Endothelial cell of umbilical vein (primary cell): ENCODE measurements at regions of chr14 and their contacts with region 1.

Region 1: GRCh38 chr14:67571272-67571850 is 28.7 kb downstream of the PIGH start:
- DNase-seq: peak; percentile 54
- H3K4me3 ChIP-seq: no peak overlapping the region
- H3K27ac ChIP-seq: no peak overlapping the region
- H3K4me1 ChIP-seq: no peaks in the 10 kb centered on the region
- H3K27me3 ChIP-seq: peaks cover 0 to 5% of the 10 kb centered on the region in 2 experiments
- CTCF ChIP-seq: peak; percentile 89 to 93
- POLR2A ChIP-seq: no peak

Region 2: DNA sequence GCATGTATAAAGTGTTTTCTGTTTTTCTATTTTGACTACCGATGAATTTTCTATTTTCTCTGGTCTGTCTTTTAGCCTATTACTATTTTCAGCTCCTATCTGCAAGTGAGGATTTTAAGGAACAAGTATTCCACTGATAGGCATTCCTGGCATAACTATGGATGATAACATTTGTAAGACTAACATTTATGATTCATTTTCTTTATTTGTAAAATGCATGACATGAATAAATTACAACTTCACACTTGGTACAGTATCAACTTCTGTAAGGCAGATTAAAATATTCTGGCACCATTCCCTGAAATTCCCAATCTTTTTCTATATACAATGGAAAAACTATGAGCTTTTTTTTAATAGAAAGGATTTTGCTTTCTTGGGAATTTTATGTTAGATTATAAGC is 503.1 kb before region 1 on chr14:
- CTCF ChIA-PET with region 1: no interaction called
- POLR2A ChIA-PET with region 1: no interaction called
- dilution Hi-C with region 1: no loop called
- intact Hi-C with region 1: no loop called
- DNase-seq: peak; percentile 8
- H3K4me3 ChIP-seq: no peak overlapping the region
- H3K27ac ChIP-seq: no peak overlapping the region
- H3K4me1 ChIP-seq: no peaks in the 10 kb centered on the region
- H3K27me3 ChIP-seq: no peaks in the 10 kb centered on the region
- CTCF ChIP-seq: no peak
- POLR2A ChIP-seq: no peak

Region 3: GRCh38 chr14:67396501-67396900 is 174.9 kb before region 1 on chr14:
- CTCF ChIA-PET with region 1: interaction called, 10 read pairs
- POLR2A ChIA-PET with region 1: no interaction called
- dilution Hi-C with region 1: no loop called
- intact Hi-C with region 1: no loop called
- DNase-seq: no peak
- H3K4me3 ChIP-seq: no peak overlapping the region
- H3K27ac ChIP-seq: peak overlapping the region; percentile 2
- H3K4me1 ChIP-seq: peaks cover 16% of the 10 kb centered on the region
- H3K27me3 ChIP-seq: no peaks in the 10 kb centered on the region
- CTCF ChIP-seq: no peak
- POLR2A ChIP-seq: no peak

Region 4: GRCh38 chr14:67514650-67515385 is 56.5 kb before region 1 on chr14:
- CTCF ChIA-PET with region 1: interaction called, 30 read pairs
- POLR2A ChIA-PET with region 1: no interaction called
- dilution Hi-C with region 1: no loop called
- intact Hi-C with region 1: no loop called
- DNase-seq: peak; percentile 15
- H3K4me3 ChIP-seq: peak overlapping the region; percentile 58 to 81 (median 71)
- H3K27ac ChIP-seq: no peak overlapping the region
- H3K4me1 ChIP-seq: peaks cover 3% of the 10 kb centered on the region
- H3K27me3 ChIP-seq: peaks cover 37 to 64% of the 10 kb centered on the region in 2 experiments
- CTCF ChIP-seq: no peak
- POLR2A ChIP-seq: no peak

Region 5: DNA sequence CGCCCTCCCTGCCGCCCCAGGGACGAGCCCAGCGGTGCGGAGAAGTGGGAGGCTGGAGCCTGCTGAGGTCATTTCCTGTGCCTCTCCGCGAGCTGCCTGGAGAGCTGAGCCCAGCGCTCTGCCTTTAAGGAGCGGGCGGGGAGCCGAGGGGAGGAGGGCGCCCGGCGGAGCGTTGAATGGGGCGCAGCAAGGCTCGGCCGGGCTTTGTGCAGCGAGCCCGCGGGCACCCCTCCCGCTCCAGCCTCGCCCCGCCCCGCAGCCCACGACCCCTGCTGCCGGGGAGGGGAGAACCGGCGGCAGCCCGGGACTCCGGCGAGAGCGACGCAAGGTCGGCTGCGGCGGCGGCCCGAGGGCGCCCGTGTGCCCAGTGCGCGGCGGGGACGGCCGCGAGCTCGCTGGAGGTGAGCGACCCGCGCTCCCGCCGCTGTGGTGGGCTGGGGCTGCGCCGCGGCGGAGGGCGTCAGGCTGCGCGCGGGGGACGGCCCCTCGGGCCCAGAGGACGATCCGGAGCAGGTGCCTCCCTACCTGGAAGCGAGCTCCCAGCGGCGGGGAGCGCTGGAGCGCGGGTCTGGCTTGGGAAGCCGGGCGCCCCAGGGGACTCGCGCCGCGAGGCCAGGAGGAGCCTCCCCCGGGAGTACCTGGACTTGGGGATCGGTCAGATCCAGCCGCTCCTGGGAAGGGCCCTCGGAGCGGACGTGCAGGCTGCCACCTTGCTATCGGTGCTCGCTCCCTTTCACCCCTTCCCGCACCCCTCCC is 38.2 kb before region 1 on chr14 and contains the start of gene PLEKHH1:
- CTCF ChIA-PET with region 1: interaction called, 336 read pairs
- POLR2A ChIA-PET with region 1: interaction called, 6 read pairs
- dilution Hi-C with region 1: no loop called
- intact Hi-C with region 1: no loop called
- DNase-seq: peak; percentile 55
- H3K4me3 ChIP-seq: peak within 1 kb of the TSS; percentile 6 to 53 (median 29)
- H3K27ac ChIP-seq: no peak within 1 kb of the TSS
- H3K4me1 ChIP-seq: peaks cover 2% of the 10 kb centered on the region
- H3K27me3 ChIP-seq: peaks cover 18 to 32% of the 10 kb centered on the region in 2 experiments
- CTCF ChIP-seq: no peak
- POLR2A ChIP-seq: no peak
- total RNA-seq, gene PLEKHH1: 0.35 and 0.71 TPM in 2 replicates

Region 6: DNA sequence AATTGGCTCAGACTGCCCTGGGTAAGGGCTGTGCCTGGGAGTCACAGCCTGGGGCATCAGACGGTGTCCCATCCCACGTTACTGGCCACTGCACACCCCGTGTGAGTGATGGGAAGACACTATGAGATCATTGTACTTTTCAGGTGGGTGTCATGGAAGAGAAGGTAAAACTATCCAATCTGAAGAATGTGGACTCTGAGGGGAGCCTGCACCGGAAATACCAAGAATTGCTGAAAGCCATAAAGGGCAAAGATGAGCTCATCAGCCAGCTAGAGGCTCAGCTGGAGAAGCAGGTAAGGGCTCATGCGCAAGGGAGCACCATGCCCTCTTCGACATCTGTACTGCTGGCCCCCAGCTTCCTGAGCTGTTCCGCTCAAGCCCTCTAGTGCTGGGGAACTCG is 14.2 kb before region 1 on chr14:
- CTCF ChIA-PET with region 1: interaction called, 85 read pairs
- POLR2A ChIA-PET with region 1: interaction called, 3 read pairs
- dilution Hi-C with region 1: no loop called
- intact Hi-C with region 1: no loop called
- DNase-seq: no peak
- H3K4me3 ChIP-seq: no peak overlapping the region
- H3K27ac ChIP-seq: no peak overlapping the region
- H3K4me1 ChIP-seq: no peaks in the 10 kb centered on the region
- H3K27me3 ChIP-seq: peaks cover 0 to 2% of the 10 kb centered on the region in 2 experiments
- CTCF ChIP-seq: no peak
- POLR2A ChIP-seq: no peak

Region 7: GRCh38 chr14:67599698-67600561 is 28.6 kb after region 1 on chr14 and contains the start of gene PIGH:
- CTCF ChIA-PET with region 1: interaction called, 17 read pairs
- POLR2A ChIA-PET with region 1: no interaction called
- dilution Hi-C with region 1: no loop called
- intact Hi-C with region 1: no loop called
- DNase-seq: peak; percentile 88
- H3K4me3 ChIP-seq: peak within 1 kb of the TSS; percentile 33 to 60 (median 54)
- H3K27ac ChIP-seq: no peak within 1 kb of the TSS
- H3K4me1 ChIP-seq: peaks cover 6% of the 10 kb centered on the region
- H3K27me3 ChIP-seq: peaks cover 0 to 4% of the 10 kb centered on the region in 2 experiments
- CTCF ChIP-seq: peak; percentile 41 to 80
- POLR2A ChIP-seq: peak; percentile 80
- total RNA-seq, gene PIGH: 9.9 and 12.3 TPM in 2 replicates